ENCODE measurements at regions of chr17 and their contacts with region 1.

Region 1: DNA sequence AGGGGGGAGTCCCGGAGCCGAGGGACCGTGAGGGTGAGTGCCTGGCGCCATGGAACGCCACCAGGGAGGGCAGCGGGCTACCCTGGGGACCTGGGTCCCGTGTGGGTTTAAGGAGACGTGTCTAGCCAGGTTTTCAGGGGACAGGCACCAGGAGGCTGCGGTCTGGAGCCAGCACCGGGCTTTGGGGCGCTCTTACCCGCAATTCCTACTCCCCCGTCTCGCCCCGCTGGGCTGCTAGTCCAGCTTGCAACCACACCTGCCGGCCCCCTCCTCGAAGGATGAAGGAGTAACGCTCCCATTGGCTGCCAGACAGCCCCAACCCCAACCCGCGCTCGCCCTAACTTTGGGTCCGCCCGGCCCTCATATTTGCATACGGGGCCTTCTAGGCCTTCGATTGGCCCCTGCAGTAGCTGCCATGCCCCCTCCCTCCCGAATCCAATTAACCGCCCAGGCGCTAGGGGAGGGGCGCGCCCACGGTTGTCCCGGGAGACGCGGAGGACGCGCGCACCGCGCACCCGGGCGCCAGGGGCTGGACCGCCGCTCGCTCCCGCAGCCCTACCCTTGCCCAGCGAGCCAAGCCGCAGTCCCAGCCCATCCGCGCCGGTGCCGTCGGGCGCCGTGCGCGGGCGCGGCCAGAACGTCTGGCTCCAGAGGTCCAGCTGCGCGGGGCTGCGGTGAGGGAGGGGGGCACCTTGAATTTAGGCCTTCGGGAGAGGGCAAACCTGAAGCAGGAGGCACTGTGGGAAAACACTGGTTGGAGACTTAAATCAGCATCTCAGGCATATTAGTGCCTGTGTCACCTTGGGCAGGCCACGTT is at the start of gene TTLL6:
- DNase-seq: peak; percentile 84 to 93 (median 93)
- H3K4me3 ChIP-seq: peak within 1 kb of the TSS in 6 of 7 experiments; percentile 11 to 73 (median 58)
- H3K27ac ChIP-seq: no peak within 1 kb of the TSS
- H3K4me1 ChIP-seq: peaks cover 0 to 16% (median 12%) of the 10 kb centered on the region in 4 experiments
- H3K27me3 ChIP-seq: peaks cover 0 to 34% (median 20%) of the 10 kb centered on the region in 5 experiments

Region 2: GRCh38 chr17:48704361-48705248 is 112.4 kb before region 1 on chr17:
- CTCF ChIA-PET with region 1: no interaction called
- POLR2A ChIA-PET with region 1: no interaction called
- DNase-seq: no peak
- H3K4me3 ChIP-seq: no peak overlapping the region
- H3K27ac ChIP-seq: no peak overlapping the region
- H3K4me1 ChIP-seq: no peaks in the 10 kb centered on the region
- H3K27me3 ChIP-seq: peaks cover 9 to 79% (median 29%) of the 10 kb centered on the region in 5 experiments

Region 3: DNA sequence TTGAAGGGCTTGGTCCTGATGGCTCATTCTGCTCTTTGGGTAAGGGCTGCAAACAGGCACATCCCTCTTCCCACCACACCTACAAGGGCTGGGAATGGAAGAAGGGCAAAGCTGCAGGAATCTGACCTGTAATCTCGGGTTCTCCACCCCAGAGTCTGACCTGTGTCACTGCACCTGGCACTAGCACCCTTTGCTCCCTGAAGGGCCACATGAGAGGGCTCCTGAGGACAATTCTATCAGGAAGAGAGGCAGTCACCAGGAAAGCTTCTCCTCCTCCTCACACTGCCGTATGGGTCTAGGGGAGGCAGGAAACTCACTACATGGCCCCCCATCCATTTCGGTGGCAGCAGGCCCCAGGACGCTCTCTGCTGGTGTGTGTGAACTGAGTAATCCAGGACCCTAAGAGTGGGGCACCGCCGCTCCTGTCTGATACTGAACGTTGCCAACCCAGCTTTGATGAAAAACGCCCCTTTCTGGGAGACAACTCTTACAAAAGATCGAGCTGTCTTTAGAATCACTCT is 26.3 kb before region 1 on chr17:
- CTCF ChIA-PET with region 1: no interaction called
- POLR2A ChIA-PET with region 1: no interaction called
- DNase-seq: no peak
- H3K4me3 ChIP-seq: no peak overlapping the region
- H3K27ac ChIP-seq: no peak overlapping the region
- H3K4me1 ChIP-seq: peaks cover 0 to 9% (median 0%) of the 10 kb centered on the region in 4 experiments
- H3K27me3 ChIP-seq: peaks cover 0 to 74% (median 23%) of the 10 kb centered on the region in 5 experiments

Region 4: GRCh38 chr17:48804925-48805411 is 12.0 kb before region 1 on chr17:
- CTCF ChIA-PET with region 1: interaction called, 67 read pairs
- POLR2A ChIA-PET with region 1: no interaction called
- DNase-seq: peak; percentile 47 to 69 (median 59)
- H3K4me3 ChIP-seq: no peak overlapping the region
- H3K27ac ChIP-seq: no peak overlapping the region
- H3K4me1 ChIP-seq: peaks cover 0 to 8% (median 5%) of the 10 kb centered on the region in 4 experiments
- H3K27me3 ChIP-seq: peaks cover 0 to 18% (median 1%) of the 10 kb centered on the region in 5 experiments

Region 5: DNA sequence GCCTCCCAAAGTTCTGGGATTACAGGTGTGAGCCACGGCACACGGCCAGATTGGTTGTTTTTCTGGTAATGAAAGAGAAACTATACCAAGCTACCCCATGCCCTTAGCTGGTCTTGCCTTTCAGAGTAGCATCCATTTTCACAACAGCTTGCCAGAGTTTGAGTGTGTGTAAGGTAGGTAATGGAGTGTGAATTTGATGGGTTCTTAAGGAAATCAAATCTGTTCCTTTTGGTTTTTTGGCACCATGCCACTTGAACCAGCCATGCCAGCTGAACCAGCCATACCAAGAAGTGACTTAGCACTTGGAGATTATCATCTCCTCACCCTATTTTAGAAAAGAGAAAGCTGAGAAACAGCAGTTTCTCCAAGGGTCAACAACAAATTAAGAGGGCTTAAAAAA is 19.0 kb after region 1 on chr17:
- CTCF ChIA-PET with region 1: interaction called, 45 read pairs
- POLR2A ChIA-PET with region 1: no interaction called
- DNase-seq: peak in 2 of 3 donors; percentile 46 to 53
- H3K4me3 ChIP-seq: no peak overlapping the region
- H3K27ac ChIP-seq: no peak overlapping the region
- H3K4me1 ChIP-seq: peaks cover 18 to 72% (median 54%) of the 10 kb centered on the region in 4 experiments
- H3K27me3 ChIP-seq: no peaks in the 10 kb centered on the region

Region 6: GRCh38 chr17:48841395-48841831 is 24.4 kb after region 1 on chr17:
- CTCF ChIA-PET with region 1: interaction called, 1,090 read pairs
- POLR2A ChIA-PET with region 1: no interaction called
- DNase-seq: peak; percentile 84 to 96 (median 94)
- H3K4me3 ChIP-seq: peak overlapping the region in 5 of 7 experiments; percentile 23 to 77 (median 39)
- H3K27ac ChIP-seq: peak overlapping the region in 1 of 2 experiments; percentile 40
- H3K4me1 ChIP-seq: peaks cover 12 to 57% (median 47%) of the 10 kb centered on the region in 4 experiments
- H3K27me3 ChIP-seq: no peaks in the 10 kb centered on the region

Measured in common myeloid progenitor, CD34-positive (primary cell).